Left ventricle myocardium superior (tissue), 1 donor: ENCODE measurements at regions of chr1 and their contacts with region 1.

Region 1: DNA sequence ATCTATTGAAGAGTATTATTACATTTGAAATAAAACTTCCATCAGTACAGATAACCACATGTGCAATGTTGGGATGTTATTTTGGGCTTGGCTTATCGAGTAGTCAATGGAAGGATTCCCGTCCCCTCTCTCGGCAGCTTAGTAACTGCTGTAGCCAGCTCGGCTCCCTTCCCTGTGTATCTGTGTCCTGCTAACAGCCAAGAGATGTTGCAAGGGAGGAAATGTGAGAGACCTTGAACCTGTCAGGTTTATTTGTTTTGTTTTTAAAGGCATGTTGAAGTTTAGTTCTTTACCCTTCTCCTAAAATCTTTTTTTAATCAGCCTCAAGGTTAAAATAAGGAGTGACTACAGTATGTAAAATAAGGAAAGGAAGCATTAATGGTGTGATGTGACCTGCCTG is 13.6 kb upstream of the TARS2 start:
- DNase-seq: peak; percentile 53
- ATAC-seq: peak; percentile 79

Region 2: GRCh38 chr1:150221552-150221951 is 252.1 kb before region 1 on chr1:
- intact Hi-C with region 1: no loop called
- DNase-seq: no peak
- ATAC-seq: no peak

Region 3: GRCh38 chr1:150521196-150521968 is 47.7 kb after region 1 on chr1:
- intact Hi-C with region 1: loop called (anchors 2 kb)
- DNase-seq: no peak
- ATAC-seq: no peak

Region 4: DNA sequence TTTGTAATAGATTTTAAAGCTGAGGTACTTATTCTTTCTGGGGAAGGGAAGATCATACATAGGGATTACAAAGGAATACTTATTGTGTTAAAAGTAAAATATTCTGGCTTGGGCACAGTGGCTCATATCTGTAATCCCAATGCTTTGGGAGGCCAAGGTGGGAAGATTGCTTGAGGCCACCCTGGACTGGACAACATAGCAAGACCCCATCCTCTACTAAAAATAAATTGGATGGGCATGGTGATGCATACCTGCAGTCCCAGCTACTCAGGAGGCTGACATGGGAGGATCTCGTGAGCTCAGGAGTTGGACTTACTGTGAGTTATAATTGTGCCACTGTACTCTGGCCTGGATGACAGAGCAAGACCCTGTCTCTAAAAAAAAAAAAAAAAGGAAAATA is 624.5 kb after region 1 on chr1:
- intact Hi-C with region 1: no loop called
- DNase-seq: no peak
- ATAC-seq: no peak